ENCODE measurements at regions of chr7 and their contacts with region 1.

Region 1: GRCh38 chr7:44986218-44987053 is 7.6 kb upstream of the MYO1G start:
- DNase-seq: peak; percentile 98
- H3K4me3 ChIP-seq: peak overlapping the region; percentile 77 to 79
- H3K27ac ChIP-seq: peak overlapping the region; percentile 82 to 91
- H3K4me1 ChIP-seq: peaks cover 24 to 26% of the 10 kb centered on the region in 2 experiments; a peak in 3 of 4 replicates
- H3K27me3 ChIP-seq: no peaks in the 10 kb centered on the region
- CTCF ChIP-seq: no peak
- EP300 ChIP-seq: peak in 1 of 2 experiments; percentile 5; a peak in 1 of 4 replicates
- RAD21 ChIP-seq: peak; percentile 5; the same call in 1 of the 2 replicates

Region 2: DNA sequence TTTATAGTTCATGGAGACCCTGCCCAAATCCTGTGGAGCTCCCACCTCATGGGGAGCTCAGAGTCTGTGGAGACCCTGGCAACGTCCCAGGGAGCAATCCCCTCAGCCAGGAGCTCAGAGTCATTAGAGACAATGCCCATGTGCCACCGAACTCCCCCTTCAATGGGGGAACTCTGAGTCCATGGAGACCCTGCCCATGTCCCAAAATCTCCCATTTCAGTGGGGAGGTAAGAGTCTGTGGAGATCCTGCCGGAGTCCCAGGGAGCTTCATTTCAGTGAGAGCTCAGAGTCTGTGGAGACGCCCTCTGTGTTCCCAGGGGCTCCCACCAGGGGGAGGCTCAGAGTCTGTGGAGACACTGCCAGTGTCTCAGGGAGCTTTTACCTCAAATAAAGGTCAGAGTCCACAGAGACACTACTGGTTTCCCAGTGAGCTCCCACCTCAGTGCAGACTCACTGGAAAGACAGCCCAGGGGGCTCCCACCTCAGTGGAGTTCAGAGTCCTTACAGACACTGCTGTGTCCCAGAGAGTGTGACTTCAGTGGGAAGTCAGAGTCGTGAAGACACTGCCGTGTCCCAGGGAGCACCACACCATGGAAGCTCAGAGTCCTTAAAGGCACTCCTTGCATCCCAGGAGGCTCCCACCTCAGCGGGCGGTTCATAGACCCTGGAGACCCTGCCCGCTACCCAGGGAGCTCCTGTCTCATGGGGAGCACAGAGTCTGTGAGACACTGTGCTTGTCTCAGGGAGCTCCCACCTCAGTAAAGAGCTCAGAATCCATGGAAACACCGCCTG is 12.6 kb before region 1 on chr7:
- CTCF ChIA-PET with region 1: interaction called, 34 read pairs
- POLR2A ChIA-PET with region 1: interaction called, 8 read pairs
- DNase-seq: peak; percentile 75
- H3K4me3 ChIP-seq: no peak overlapping the region
- H3K27ac ChIP-seq: no peak overlapping the region
- H3K4me1 ChIP-seq: peaks cover 0 to 3% of the 10 kb centered on the region in 2 experiments; a peak in 1 of 4 replicates
- H3K27me3 ChIP-seq: no peaks in the 10 kb centered on the region
- CTCF ChIP-seq: peak; percentile 61
- EP300 ChIP-seq: no peak
- RAD21 ChIP-seq: peak; percentile 59

Region 3: GRCh38 chr7:44999245-45000095 is 13.0 kb after region 1 on chr7:
- CTCF ChIA-PET with region 1: interaction called, 7 read pairs
- POLR2A ChIA-PET with region 1: interaction called, 10 read pairs
- DNase-seq: peak; percentile 99
- H3K4me3 ChIP-seq: peak overlapping the region; percentile 48 to 77
- H3K27ac ChIP-seq: peak overlapping the region; percentile 80 to 86
- H3K4me1 ChIP-seq: peaks cover 0 to 10% of the 10 kb centered on the region in 2 experiments; a peak in 3 of 4 replicates
- H3K27me3 ChIP-seq: no peaks in the 10 kb centered on the region
- CTCF ChIP-seq: no peak
- EP300 ChIP-seq: 0 out of 4 replicates have a peak, but pooled peaks of 1 of the 2 experiments have one; percentile 11
- RAD21 ChIP-seq: no peak